ENCODE measurements at regions of chr6 and their contacts with region 1.

Region 1: DNA sequence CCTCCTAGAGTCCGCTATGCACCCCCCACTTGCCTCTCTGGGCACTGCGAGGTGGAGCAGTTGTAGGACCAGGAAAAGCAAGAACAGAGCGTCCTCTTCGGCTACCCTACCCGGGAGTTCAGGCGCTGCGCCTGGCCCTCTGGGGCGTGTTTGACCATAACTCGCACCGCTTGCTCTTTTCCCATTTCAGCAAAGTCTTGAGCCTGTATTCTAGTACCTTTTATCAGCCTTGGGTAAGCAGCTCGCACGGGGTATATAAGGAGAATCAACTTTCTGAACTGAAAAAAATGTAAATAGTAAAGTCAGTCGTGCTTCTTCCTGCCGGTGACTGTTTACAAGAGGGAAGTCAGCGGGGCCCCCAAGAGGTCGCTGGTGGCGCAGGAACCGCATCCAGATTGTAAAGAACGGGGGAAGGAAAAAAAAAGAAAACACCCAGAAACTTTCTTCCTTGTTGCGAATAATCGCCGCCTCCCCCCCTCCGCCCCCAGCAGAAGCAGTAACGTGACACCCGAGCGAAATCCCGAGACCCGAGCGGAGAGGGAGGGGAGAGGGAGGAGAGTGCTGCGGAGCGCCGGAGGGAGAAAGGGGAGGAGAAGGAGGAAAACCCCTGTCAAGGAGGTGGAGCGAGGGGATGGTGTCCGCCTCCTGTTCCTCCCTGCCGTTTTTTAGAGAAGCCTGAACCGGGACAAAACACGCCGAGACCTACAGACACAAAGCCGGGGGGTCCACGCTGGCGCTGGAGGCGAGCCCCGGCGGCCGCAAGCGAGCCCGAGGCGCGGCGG is at the start of gene UST:
- DNase-seq: peak; percentile 71
- ATAC-seq: peak; percentile 60
- H3K4me3 Mint-ChIP-seq: peak within 1 kb of the TSS; percentile 88
- H3K27ac Mint-ChIP-seq: no peak within 1 kb of the TSS
- H3K4me1 Mint-ChIP-seq: peaks cover 19% of the 10 kb centered on the region
- H3K27me3 Mint-ChIP-seq: peaks cover 70% of the 10 kb centered on the region
- total RNA-seq, gene UST: 0.16 to 0.42 TPM

Region 2: GRCh38 chr6:148723484-148723883 is 23.1 kb before region 1 on chr6:
- CTCF ChIA-PET with region 1: no interaction called
- POLR2A ChIA-PET with region 1: no interaction called
- DNase-seq: no peak
- ATAC-seq: no peak
- H3K4me3 Mint-ChIP-seq: no peak overlapping the region
- H3K27ac Mint-ChIP-seq: no peak overlapping the region
- H3K4me1 Mint-ChIP-seq: no peaks in the 10 kb centered on the region
- H3K27me3 Mint-ChIP-seq: peaks cover 23% of the 10 kb centered on the region

Region 3: DNA sequence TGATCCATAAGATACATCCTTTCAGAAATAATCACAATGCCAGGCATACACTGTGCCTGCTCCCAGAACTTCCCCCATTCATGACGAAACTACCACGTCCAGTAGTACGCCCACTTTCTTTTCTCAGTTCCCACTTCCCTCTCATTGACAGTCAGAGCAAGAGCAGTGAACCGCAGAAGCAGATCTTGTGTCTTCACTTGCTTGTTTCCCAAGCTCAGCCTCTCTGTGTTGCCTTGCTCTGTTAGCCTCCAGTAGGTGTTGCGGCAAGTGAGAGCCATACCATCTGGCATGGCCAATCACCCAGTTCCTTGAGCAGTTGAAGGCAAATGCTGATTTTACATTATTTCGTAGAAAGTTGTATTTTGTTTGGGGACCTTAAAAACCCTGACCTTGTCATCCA is 11.9 kb after region 1 on chr6:
- CTCF ChIA-PET with region 1: interaction called, 14 read pairs
- POLR2A ChIA-PET with region 1: interaction called, 3 read pairs
- DNase-seq: peak; percentile 46
- ATAC-seq: peak; percentile 20
- H3K4me3 Mint-ChIP-seq: no peak overlapping the region
- H3K27ac Mint-ChIP-seq: peak overlapping the region; percentile 23
- H3K4me1 Mint-ChIP-seq: peaks cover 40% of the 10 kb centered on the region
- H3K27me3 Mint-ChIP-seq: peaks cover 25% of the 10 kb centered on the region

Region 4: DNA sequence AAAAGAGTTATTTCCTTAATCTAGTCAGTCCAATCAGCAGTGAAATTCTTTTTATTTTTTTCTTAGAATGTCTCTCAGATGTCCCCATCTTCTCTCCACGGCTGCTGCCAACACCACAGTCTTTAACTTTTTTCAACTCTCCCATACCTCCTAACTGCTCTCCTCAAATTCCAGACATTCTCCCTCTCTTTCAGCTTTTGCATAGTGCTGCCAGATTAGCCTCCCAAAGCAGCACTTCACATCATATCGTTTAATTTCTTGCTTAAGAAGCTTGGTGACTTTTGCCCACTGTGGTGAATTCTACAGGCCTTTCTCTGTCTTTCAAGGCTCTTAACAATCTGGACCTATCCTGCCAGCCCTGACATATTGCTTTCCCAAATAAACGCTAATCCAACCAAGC is 233.7 kb after region 1 on chr6:
- CTCF ChIA-PET with region 1: no interaction called
- POLR2A ChIA-PET with region 1: no interaction called
- DNase-seq: no peak
- ATAC-seq: no peak
- H3K4me3 Mint-ChIP-seq: no peak overlapping the region
- H3K27ac Mint-ChIP-seq: no peak overlapping the region
- H3K4me1 Mint-ChIP-seq: no peaks in the 10 kb centered on the region
- H3K27me3 Mint-ChIP-seq: peaks cover 8% of the 10 kb centered on the region